ENCODE measurements at regions of chr1 and their contacts with region 1.

Region 1: GRCh38 chr1:158149577-158150269 is 31.0 kb upstream of the CD1D start:
- DNase-seq: peak; percentile 88 to 90
- H3K4me3 ChIP-seq: peak overlapping the region; percentile 11
- H3K4me1 ChIP-seq: no peaks in the 10 kb centered on the region
- H3K27me3 ChIP-seq: peaks cover 24% of the 10 kb centered on the region

Region 2: GRCh38 chr1:158087320-158087927 is 62.3 kb before region 1 on chr1:
- in situ Hi-C with region 1: loop called (anchors 10 kb)
- DNase-seq: peak; percentile 75 to 83
- H3K4me3 ChIP-seq: no peak overlapping the region
- H3K4me1 ChIP-seq: no peaks in the 10 kb centered on the region
- H3K27me3 ChIP-seq: no peaks in the 10 kb centered on the region

Region 3: DNA sequence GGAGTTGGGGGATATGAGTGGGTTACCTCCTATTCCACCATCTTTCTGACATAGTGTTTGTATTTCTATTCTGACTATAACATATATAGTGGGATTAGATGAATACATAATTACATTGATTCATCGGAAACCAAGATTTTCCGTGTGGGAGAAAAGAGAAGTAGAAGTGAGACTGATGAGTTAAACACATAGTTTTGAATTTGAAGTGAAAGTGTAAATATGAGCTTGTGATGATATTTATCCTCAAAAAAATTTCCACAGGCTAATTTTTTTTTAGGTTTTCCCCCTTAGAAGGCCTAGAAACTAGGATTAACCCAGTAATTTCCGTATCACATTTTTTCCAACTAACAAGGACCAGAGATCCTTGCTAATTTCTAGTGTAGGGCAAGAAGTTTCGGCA is 174.7 kb after region 1 on chr1:
- in situ Hi-C with region 1: no loop called
- DNase-seq: no peak
- H3K4me3 ChIP-seq: no peak overlapping the region
- H3K4me1 ChIP-seq: no peaks in the 10 kb centered on the region
- H3K27me3 ChIP-seq: no peaks in the 10 kb centered on the region

Measured in HAP-1 (cell line).